Naive thymus-derived CD4-positive, alpha-beta T cell (primary cell): ENCODE measurements at regions of chr16 and their contacts with region 1.

Region 1: DNA sequence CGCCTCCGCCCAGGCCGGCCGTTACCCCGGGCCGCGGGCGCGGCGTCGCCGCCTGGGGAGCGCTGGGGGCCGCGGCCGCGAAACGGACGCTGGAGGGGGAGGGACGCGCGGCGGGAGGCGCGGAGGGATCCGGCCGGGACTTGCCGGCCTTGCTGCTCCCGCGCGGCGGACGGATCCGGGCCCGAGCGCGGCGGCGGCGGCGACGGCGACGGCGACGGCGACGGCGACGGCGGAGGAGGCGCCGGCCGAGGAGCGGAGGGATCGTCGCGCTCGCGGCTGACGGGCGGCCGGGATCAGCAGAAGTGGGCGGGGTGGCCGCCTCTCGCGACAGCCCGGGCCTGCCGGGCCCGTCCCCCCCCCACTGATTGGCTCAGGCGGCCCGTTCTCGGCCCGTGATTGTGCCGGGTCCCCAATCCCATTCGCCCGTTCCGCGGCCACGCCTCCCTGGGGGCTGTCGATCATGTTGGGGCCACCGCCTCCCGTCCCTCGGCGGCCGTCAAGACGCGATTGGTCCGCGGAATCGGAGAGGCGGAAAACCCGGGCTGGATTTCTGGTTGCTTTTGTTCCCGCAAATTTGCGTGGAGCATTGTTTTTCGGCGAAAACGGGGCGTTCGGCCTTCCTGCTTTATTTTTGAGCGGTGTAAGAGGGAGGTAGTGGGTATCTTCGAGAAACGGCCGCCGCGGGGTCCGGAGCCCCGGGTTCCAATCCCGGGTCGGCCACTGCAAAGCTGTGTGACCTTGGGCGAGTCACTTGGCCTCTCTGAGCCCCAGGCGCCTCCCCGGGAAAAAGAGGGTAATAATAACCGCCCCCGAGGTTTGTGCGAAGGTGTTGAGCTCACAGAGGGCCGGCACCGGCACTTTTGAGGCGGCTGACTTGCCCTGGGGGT is at the start of gene ZCCHC14:
- DNase-seq: peak; percentile 95 to 99 (median 98)
- ATAC-seq: peak; percentile 97
- H3K4me3 ChIP-seq: peak within 1 kb of the TSS; percentile 75
- H3K4me3 Mint-ChIP-seq: peak within 1 kb of the TSS; percentile 85 to 95 (median 90)
- H3K27ac ChIP-seq: peak within 1 kb of the TSS; percentile 66
- H3K27ac Mint-ChIP-seq: peak within 1 kb of the TSS; percentile 81 to 93 (median 85)
- H3K4me1 ChIP-seq: peaks cover 21 to 36% of the 10 kb centered on the region in 2 donors
- H3K4me1 Mint-ChIP-seq: peaks cover 24 to 59% (median 40%) of the 10 kb centered on the region in 7 donors
- H3K27me3 ChIP-seq: no peaks in the 10 kb centered on the region
- H3K27me3 Mint-ChIP-seq: peaks cover 0 to 53% (median 0%) of the 10 kb centered on the region in 5 donors
- total RNA-seq, gene ZCCHC14: 8.3 to 34.2 (median 23.5) TPM

Region 2: DNA sequence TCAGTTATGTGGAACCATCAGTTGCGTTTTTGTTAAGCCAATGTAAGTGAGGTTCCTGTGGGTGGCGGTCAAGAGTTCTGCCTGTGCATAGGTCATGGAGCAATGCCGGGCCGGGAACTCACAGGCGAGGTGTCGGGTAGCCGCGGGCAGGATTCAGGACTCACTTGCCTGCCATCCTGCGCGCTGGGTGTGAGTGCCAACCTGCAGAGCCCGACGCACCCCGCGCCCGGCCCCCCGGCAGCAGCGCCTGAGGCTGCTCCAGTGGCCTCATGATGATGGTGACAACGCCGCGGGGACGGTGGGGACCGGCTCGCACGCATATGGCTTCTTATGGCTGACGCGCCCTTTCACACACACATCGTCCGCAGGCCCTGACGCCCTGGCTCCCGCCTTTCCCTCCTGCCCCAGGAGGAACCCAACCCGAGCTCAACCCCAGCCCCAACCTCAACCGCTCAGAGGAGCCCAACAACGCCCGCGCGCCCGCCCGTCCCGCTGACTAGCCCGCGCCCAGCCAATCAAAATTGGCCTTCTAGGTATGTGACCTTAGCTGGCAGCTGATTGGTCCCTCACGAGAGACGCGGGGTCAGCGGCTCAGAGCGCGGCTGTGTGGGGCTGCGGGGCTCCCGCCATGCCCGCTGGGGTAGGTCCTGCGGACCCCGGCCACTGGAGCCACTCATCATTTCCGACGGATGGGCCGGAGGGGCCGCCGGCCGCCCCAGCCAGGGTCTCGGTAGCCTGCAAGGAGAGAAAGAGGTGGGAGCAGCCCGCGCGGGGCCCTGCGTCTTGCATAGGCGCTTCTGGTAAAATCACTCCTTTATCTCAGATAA is 175.8 kb before region 1 on chr16 and contains the start of gene C16orf95:
- CTCF ChIA-PET with region 1: no interaction called
- POLR2A ChIA-PET with region 1: no interaction called
- intact Hi-C with region 1: loop called (anchors 1 to 2 kb)
- DNase-seq: peak; percentile 93 to 100 (median 96)
- ATAC-seq: peak; percentile 96
- H3K4me3 ChIP-seq: peak within 1 kb of the TSS; percentile 86
- H3K4me3 Mint-ChIP-seq: peak within 1 kb of the TSS; percentile 92 to 100 (median 97)
- H3K27ac ChIP-seq: peak within 1 kb of the TSS; percentile 91
- H3K27ac Mint-ChIP-seq: peak within 1 kb of the TSS; percentile 91 to 99 (median 94)
- H3K4me1 ChIP-seq: peaks cover 8 to 11% of the 10 kb centered on the region in 2 donors
- H3K4me1 Mint-ChIP-seq: peaks cover 11 to 23% (median 16%) of the 10 kb centered on the region in 7 donors
- H3K27me3 ChIP-seq: no peaks in the 10 kb centered on the region
- H3K27me3 Mint-ChIP-seq: peaks cover 0 to 2% (median 0%) of the 10 kb centered on the region in 5 donors
- total RNA-seq, gene C16orf95: 1.3 to 8.6 (median 2.6) TPM

Region 3: GRCh38 chr16:87387942-87388817 is 104.8 kb before region 1 on chr16:
- CTCF ChIA-PET with region 1: no interaction called
- POLR2A ChIA-PET with region 1: interaction called, 4 read pairs
- intact Hi-C with region 1: loop called (anchors 1 kb)
- DNase-seq: peak; percentile 46 to 95 (median 88)
- ATAC-seq: peak; percentile 75
- H3K4me3 ChIP-seq: peak overlapping the region; percentile 27
- H3K4me3 Mint-ChIP-seq: peak overlapping the region; percentile 27 to 78 (median 68)
- H3K27ac ChIP-seq: peak overlapping the region; percentile 86
- H3K27ac Mint-ChIP-seq: peak overlapping the region; percentile 87 to 99 (median 96)
- H3K4me1 ChIP-seq: peaks cover 17 to 29% of the 10 kb centered on the region in 2 donors
- H3K4me1 Mint-ChIP-seq: peaks cover 15 to 55% (median 44%) of the 10 kb centered on the region in 7 donors
- H3K27me3 ChIP-seq: no peaks in the 10 kb centered on the region
- H3K27me3 Mint-ChIP-seq: peaks cover 0 to 2% (median 0%) of the 10 kb centered on the region in 5 donors

Region 4: GRCh38 chr16:87416826-87417527 is 76.0 kb before region 1 on chr16:
- CTCF ChIA-PET with region 1: no interaction called
- POLR2A ChIA-PET with region 1: no interaction called
- intact Hi-C with region 1: loop called in 1 of 2 experiments (anchors 1 kb)
- DNase-seq: peak in 6 of 9 donors; percentile 25 to 48 (median 42)
- ATAC-seq: no peak
- H3K4me3 ChIP-seq: no peak overlapping the region
- H3K4me3 Mint-ChIP-seq: no peak overlapping the region
- H3K27ac ChIP-seq: no peak overlapping the region
- H3K27ac Mint-ChIP-seq: no peak overlapping the region
- H3K4me1 ChIP-seq: no peaks in the 10 kb centered on the region
- H3K4me1 Mint-ChIP-seq: peaks cover 0 to 8% (median 0%) of the 10 kb centered on the region in 7 donors
- H3K27me3 ChIP-seq: no peaks in the 10 kb centered on the region
- H3K27me3 Mint-ChIP-seq: no peaks in the 10 kb centered on the region

Region 5: GRCh38 chr16:87461466-87461991 is 31.4 kb before region 1 on chr16:
- CTCF ChIA-PET with region 1: no interaction called
- POLR2A ChIA-PET with region 1: interaction called, 8 read pairs
- intact Hi-C with region 1: loop called (anchors 1 to 2 kb)
- DNase-seq: peak in 1 of 9 donors; percentile 6
- ATAC-seq: no peak
- H3K4me3 ChIP-seq: no peak overlapping the region
- H3K4me3 Mint-ChIP-seq: no peak overlapping the region
- H3K27ac ChIP-seq: no peak overlapping the region
- H3K27ac Mint-ChIP-seq: peak overlapping the region in 4 of 9 donors; percentile 34 to 46 (median 43)
- H3K4me1 ChIP-seq: peaks cover 17 to 27% of the 10 kb centered on the region in 2 donors
- H3K4me1 Mint-ChIP-seq: peaks cover 32 to 43% (median 38%) of the 10 kb centered on the region in 7 donors
- H3K27me3 ChIP-seq: no peaks in the 10 kb centered on the region
- H3K27me3 Mint-ChIP-seq: peaks cover 0 to 4% (median 0%) of the 10 kb centered on the region in 5 donors

Region 6: GRCh38 chr16:87860553-87861299 is 367.8 kb after region 1 on chr16:
- CTCF ChIA-PET with region 1: no interaction called
- POLR2A ChIA-PET with region 1: no interaction called
- intact Hi-C with region 1: loop called in 1 of 2 experiments (anchors 10 kb)
- DNase-seq: no peak
- ATAC-seq: no peak
- H3K4me3 ChIP-seq: no peak overlapping the region
- H3K4me3 Mint-ChIP-seq: peak overlapping the region in 1 of 10 donors; percentile 37
- H3K27ac ChIP-seq: no peak overlapping the region
- H3K27ac Mint-ChIP-seq: peak overlapping the region in 4 of 9 donors; percentile 28 to 81 (median 76)
- H3K4me1 ChIP-seq: peaks cover 5 to 19% of the 10 kb centered on the region in 2 donors
- H3K4me1 Mint-ChIP-seq: peaks cover 4 to 70% (median 11%) of the 10 kb centered on the region in 7 donors
- H3K27me3 ChIP-seq: no peaks in the 10 kb centered on the region
- H3K27me3 Mint-ChIP-seq: no peaks in the 10 kb centered on the region